Uterus (tissue), 4 donors: ENCODE measurements at regions of chr22 and their contacts with region 1.

Region 1: GRCh38 chr22:41946629-41947423 is at the start of gene CENPM:
- DNase-seq: peak; percentile 87 to 91
- H3K4me3 ChIP-seq: peak within 1 kb of the TSS; percentile 56 to 60
- H3K27ac ChIP-seq: peak within 1 kb of the TSS; percentile 44 to 56
- H3K4me1 ChIP-seq: peaks cover 0 to 6% of the 10 kb centered on the region in 2 donors
- H3K27me3 ChIP-seq: no peaks in the 10 kb centered on the region
- CTCF ChIP-seq: peak in 2 of 4 experiments; percentile 5 to 34
- POLR2A ChIP-seq: no peak
- total RNA-seq, gene CENPM: 12.7 TPM in 1 of 4 donors, not detected in the others

Region 2: DNA sequence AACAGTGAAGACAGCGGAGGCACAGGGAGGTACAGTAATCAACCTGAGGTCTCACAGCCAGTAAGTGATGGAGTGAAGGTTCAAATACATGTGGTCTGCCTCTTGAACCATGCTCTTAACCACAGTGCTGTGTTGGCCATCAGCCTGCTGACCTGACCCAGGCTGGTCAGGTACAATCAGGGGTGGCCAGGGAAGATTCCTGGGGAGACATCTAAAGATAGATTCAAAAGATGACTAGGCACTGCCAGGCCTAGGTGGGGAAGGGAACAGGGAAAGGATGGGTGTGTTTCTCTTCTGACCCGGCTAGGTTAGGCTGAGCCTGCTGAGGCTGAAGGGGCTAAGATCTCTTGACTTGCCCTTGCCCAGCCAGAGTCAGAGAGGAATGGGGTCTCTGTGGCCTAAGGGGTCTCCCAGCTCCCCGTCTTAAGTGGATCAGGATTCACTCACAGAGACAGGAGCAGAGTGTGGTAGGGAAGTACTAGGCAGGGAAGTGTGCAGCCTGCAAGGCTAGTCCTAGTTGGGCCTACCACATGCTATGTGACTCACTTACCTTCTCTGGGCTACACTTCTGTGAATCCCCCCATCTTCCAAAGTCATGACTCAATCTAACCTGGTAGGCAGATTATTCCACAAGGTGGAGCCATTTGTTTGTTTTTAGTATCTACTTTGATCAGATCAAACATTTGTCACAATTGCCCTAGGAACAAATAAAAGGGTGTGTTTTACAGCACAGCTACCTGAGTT is 124.3 kb before region 1 on chr22:
- intact Hi-C with region 1: loop called (anchors 10 kb)
- DNase-seq: no peak
- H3K4me3 ChIP-seq: no peak overlapping the region
- H3K27ac ChIP-seq: no peak overlapping the region
- H3K4me1 ChIP-seq: no peaks in the 10 kb centered on the region
- H3K27me3 ChIP-seq: no peaks in the 10 kb centered on the region
- CTCF ChIP-seq: peak; percentile 27 to 57 (median 46)
- POLR2A ChIP-seq: no peak

Region 3: DNA sequence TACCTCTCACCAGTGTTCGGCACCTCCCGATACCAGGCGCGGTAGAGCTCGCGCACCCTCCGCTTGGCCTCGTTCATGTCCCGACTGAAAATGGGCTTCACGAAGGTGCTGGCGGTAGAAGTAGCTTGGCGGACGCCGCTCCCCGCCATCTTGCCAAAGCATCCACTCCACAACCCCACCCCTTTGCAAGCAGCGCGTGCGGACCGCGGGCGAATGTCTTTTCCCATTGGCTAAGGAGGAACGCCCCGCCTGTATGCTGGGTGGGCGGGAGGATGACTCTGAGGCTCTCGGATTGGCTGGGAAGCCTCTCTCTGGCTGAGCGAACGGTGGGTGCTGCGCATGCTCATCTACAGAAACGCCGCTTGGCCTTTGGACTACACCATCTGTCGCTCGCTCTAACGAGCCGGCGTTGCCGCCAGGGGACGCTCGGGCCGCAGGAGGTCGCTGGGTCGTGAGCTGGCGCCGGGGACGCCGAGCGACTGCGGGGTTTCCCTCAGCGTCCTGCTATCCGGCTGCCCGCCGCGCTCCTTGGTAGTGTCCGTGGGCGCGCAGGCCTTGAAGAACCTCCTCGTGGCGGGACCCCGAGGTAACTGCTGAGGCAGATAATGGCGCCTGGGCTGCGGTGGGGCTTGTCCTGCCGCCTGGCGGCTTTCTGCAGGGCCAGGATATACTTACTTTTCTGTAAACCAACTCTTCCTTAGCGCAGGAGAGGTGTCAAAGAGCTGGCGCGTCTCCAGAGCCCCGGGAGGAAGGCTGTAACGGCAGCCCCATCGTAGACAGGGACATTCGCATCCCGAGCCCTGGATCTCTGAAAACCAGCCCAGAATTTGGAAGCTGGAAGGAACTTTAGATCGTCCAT is 144.0 kb after region 1 on chr22 and contains the start of gene NDUFA6:
- intact Hi-C with region 1: no loop called
- DNase-seq: peak; percentile 98 to 99
- H3K4me3 ChIP-seq: peak within 1 kb of the TSS; percentile 84 to 92
- H3K27ac ChIP-seq: peak within 1 kb of the TSS; percentile 91 to 94
- H3K4me1 ChIP-seq: peaks cover 4 to 5% of the 10 kb centered on the region in 2 donors
- H3K27me3 ChIP-seq: no peaks in the 10 kb centered on the region
- CTCF ChIP-seq: peak; percentile 93 to 99 (median 97)
- POLR2A ChIP-seq: peak; percentile 89 to 90
- total RNA-seq, gene NDUFA6: 36.5 to 116 (median 46.0) TPM